Posterior vena cava (tissue), 2 donors: ENCODE measurements at regions of chr1 and their contacts with region 1.

Region 1: DNA sequence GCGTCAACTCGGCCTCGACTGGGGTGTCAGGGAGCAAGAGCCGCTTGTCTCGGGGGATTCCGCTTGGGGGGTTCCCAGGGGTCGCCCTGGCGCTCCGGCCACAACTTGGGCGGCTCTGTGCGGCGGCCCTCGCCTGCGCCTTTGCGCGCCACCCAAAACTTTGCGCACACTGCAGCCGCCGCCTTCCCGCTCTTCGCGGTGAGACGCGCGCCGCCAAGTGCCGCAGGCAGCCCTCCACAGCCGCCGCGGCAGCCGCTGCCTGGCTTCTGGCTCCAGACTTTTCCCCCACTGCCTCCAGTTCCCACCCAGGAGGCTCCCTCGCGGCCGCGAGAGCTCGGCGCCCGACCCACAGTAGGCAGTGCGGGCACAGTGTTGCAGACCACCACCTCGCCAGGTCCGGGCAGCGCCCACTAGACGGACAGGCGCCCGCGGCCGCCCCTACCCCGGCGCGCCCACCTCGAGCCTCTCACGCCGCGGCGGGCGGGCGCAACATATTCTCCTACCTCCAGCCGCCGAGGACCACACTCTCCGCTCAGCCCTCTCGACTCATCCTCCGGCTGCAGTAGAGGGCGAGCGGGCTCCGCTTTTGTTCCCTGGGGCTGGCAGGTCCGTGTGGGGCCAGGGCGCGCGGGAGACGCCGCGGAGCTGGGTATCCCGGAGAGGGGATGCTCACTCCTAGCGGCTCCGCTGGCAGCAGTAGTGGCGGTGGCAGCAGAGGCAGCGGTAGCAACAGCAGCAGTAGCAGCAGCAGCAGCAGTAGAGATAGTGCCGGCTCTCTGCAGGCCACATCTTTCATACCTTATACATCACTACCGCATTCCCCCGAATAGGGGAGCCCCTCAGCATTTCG is 296.6 kb downstream of the OMA1 start:
- DNase-seq: peak; percentile 82

Region 2: GRCh38 chr1:58119971-58120370 is 130.0 kb before region 1 on chr1:
- intact Hi-C with region 1: loop called in 1 of 2 experiments (anchors 5 kb)
- DNase-seq: no peak

Region 3: GRCh38 chr1:58345215-58346035 is 95.5 kb after region 1 on chr1:
- intact Hi-C with region 1: loop called in 1 of 2 experiments (anchors 1 kb)
- DNase-seq: no peak